ENCODE measurements at regions of chr11 and their contacts with region 1.

Region 1: GRCh38 chr11:6443269-6444003 is 2.6 kb upstream of the HPX start:
- DNase-seq: peak; percentile 64
- H3K4me3 Mint-ChIP-seq: no peak overlapping the region
- H3K27ac Mint-ChIP-seq: no peak overlapping the region
- H3K4me1 Mint-ChIP-seq: no peaks in the 10 kb centered on the region
- H3K27me3 Mint-ChIP-seq: peaks cover 2% of the 10 kb centered on the region

Region 2: DNA sequence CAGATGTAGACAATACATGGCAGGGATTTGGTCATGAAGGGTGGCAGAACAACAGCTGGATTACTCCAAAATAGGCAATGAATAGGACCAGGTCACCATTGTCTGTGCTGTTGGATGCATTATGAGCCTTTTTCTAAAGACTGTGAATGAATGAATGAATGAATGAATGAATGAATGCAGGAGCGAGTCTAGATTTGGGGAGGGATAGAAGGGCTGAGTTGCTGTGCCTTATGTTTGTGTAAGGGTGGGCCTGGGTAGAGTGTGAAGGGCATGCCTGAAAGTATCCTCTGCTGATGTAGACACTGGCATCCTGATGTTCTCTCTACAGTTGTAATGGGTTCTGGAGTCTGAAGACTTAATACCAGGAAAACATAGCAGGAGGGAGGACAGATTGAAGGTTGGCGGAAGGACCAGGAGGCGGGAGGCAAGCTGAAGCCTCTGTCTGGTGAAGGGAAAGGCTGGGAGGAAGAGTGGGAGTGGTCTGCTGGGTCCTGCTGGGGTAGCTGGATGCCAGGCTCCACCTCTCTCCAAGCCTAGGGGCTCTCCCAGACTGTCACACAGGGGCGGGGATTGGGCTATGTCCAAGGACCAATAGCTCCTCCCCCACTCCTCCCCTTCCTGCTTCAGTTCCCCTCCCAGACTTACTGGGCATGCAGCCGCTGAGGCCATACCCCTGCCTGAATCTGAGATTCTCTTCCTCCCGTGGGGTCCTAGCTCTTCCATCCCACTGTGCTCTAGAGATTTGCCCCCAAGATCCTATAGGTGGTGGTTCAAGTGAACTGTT is 25.5 kb after region 1 on chr11:
- CTCF ChIA-PET with region 1: interaction called, 12 read pairs
- POLR2A ChIA-PET with region 1: no interaction called
- DNase-seq: no peak
- H3K4me3 Mint-ChIP-seq: no peak overlapping the region
- H3K27ac Mint-ChIP-seq: no peak overlapping the region
- H3K4me1 Mint-ChIP-seq: peaks cover 15% of the 10 kb centered on the region
- H3K27me3 Mint-ChIP-seq: peaks cover 10% of the 10 kb centered on the region

Measured in activated CD4-positive, alpha-beta T cell treated with anti-CD3 and anti-CD28 coated beads, Interleukin-2, amount 10 ng/mL, durations not matched to agents 7 days and 5 days (primary cell).